ENCODE measurements at regions of chr6 and their contacts with region 1.

Region 1: DNA sequence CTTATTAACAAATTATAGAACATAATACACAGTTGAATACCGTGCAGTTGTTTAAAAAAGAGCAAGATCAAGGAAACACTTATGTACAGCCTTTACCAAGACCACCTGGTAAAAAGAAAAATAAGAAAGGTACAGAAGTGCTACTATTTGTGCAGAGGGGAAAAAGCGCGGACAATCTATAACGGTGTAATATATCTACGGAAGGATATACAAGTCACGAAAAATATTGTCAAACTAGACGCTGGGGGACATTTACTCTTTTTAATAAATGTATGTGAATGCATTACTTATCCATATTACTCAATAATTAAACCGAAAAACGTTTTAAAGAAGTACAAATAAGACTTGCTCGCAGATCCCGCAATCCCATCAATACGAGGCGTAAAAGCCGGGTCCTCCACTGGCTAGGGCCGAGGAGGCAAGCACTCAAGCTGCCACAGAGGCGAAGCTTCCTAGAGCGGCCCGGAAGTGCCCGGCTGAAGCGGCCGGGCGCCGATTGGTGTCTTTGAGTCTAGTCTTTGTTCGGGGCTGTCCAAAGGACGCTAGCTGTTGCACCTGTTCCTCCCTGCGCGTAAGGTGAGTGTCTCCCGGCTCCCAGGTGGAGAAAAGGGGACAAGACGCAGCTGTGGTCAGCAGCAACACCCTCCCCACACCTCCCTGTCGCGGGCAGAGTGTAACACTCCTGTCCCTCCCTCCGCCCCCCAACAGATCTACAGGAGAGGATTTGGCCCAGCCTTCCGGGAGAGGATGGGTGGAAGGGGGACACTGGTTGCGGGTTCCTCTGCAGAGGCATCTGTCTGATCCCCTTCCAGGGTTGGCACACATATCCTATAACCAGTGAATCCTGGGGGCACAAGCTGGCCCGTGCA is at the start of gene ZSCAN16:
- DNase-seq: peak; percentile 86 to 94 (median 91)
- ATAC-seq: peak; percentile 98 to 100
- H3K4me3 ChIP-seq: peak within 1 kb of the TSS; percentile 61
- H3K27ac ChIP-seq: peak within 1 kb of the TSS; percentile 49
- H3K4me1 ChIP-seq: peaks cover 1% of the 10 kb centered on the region
- H3K27me3 ChIP-seq: no peaks in the 10 kb centered on the region
- total RNA-seq, gene ZSCAN16: 2.5 to 3.2 (median 2.8) TPM

Region 2: DNA sequence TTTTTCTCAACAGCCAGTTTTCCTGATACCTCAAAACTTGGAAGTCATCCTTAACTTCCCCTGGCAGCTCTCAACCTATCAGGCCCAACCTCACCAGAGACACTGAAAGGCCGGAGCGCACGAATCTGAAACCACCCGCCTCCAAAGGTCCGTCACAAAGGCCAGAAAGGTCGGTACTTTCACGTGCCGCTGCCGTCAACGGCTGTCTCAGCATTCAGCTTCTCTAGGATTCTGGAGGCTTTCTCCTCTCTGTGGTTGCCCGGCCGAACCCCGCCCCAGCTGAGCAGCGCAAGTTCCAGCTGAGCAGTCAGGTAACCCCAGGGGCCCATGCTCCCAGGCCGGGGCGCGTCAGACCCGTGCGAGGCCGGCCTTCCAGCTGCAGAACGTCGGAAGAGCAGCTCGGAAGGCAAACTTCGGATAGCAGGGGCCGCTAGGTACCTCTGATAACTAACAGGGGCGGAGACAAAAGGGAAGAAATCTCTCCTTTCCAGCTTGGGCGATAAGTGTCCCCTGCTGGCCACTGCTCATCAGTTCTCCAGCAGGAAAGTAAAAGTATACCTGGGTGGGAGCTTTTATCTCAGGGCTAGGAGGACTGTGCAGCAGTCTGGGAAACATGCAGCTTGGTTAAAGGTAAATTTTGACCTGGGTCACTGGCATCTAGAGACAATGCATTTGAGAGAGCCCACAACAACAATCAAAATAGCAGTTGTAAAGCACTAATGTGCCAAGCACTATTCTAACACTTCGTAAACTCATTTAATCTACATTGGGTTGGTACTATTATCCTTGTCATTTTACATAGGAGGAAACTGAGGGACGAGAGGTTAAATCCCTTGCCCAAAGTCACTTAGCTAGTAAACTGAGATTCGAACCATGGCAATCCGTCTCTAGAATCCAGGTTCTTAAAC is 259.2 kb after region 1 on chr6:
- intact Hi-C with region 1: loop called in 1 of 4 experiments (anchors 10 kb)
- DNase-seq: peak; percentile 86 to 92 (median 91)
- ATAC-seq: peak; percentile 96 to 97
- H3K4me3 ChIP-seq: peak overlapping the region; percentile 65
- H3K27ac ChIP-seq: peak overlapping the region; percentile 94
- H3K4me1 ChIP-seq: peaks cover 2% of the 10 kb centered on the region
- H3K27me3 ChIP-seq: no peaks in the 10 kb centered on the region

Measured in right cardiac atrium (tissue), 5 donors.